Right ventricle myocardium superior (tissue), 1 donor: ENCODE measurements at regions of chr3 and their contacts with region 1.

Region 1: GRCh38 chr3:40329071-40329470 is 19.6 kb downstream of the EIF1B start:
- DNase-seq: no peak
- ATAC-seq: no peak

Region 2: DNA sequence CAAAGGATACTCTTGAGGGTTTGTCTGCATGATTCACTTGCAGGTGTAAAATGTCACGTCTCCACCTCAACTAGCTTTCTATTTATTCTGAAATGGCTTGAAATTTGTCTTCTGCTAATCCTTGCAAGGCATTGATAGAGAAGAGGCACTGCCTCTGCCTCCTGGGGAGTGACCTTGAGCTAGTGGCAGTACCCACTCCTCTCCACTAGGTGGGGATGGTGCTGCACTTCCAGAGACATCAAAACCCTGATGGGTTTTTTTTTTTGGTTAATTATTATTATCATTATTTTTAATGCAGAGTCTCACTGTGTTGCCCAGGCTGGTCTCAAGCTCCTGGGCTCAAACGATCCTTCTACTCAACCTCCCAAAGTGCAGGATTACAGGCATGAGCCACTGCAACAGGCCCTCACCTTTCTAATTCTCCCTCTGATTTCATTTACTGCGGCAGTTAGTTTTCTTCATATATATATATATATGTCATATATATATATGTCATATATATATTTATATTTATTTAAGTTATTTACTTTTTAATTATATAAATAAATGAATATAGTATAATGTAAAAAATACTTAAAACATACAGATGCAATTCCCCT is 137.1 kb before region 1 on chr3:
- intact Hi-C with region 1: no loop called
- DNase-seq: peak; percentile 60
- ATAC-seq: peak; percentile 58

Region 3: GRCh38 chr3:41881233-41881821 is 1552.3 kb after region 1 on chr3:
- intact Hi-C with region 1: loop called (anchors 5 kb)
- DNase-seq: no peak
- ATAC-seq: no peak